Sciatic nerve (tissue), 2 donors: ENCODE measurements at regions of chr1 and their contacts with region 1.

Region 1: DNA sequence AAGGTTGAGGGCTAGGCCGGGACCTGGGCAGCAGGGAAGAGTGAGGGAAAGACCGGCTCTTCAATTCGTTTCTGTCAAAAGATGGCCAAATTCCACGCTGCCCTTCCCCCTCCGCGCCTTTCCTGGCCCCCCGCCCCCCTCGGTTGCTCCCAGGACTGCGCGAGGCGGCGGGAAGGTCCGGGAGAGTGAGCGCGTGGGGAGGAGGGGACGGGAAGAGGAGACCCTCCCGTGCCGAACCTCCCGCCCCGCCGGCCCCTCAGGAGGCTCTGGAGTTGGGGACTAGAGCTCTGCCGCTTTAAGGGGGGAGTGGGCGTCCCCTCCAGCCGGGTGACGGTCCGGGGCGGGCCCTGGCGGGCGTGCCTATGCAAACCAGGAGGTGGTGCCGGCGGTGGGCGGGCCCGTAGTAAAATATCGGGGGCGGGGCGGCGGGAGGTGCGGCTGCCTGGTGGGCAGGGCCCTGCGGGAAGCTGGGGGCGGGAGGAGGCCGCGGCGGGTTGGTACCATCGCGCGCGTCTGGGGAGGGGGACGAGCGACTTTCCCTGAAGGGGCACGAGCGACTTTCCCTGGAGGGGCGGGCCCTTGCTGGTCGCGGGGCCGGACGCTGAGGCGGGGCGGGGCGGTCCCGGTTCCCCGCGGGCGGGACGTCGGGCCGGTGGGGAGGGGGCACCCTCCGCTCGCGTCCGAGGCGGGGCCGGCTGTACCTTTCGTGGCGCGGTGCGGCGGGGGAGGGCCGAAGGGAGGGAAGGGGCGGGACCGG is 58.2 kb downstream of the BCL9 start:
- DNase-seq: peak; percentile 99
- ATAC-seq: peak; percentile 96

Region 2: DNA sequence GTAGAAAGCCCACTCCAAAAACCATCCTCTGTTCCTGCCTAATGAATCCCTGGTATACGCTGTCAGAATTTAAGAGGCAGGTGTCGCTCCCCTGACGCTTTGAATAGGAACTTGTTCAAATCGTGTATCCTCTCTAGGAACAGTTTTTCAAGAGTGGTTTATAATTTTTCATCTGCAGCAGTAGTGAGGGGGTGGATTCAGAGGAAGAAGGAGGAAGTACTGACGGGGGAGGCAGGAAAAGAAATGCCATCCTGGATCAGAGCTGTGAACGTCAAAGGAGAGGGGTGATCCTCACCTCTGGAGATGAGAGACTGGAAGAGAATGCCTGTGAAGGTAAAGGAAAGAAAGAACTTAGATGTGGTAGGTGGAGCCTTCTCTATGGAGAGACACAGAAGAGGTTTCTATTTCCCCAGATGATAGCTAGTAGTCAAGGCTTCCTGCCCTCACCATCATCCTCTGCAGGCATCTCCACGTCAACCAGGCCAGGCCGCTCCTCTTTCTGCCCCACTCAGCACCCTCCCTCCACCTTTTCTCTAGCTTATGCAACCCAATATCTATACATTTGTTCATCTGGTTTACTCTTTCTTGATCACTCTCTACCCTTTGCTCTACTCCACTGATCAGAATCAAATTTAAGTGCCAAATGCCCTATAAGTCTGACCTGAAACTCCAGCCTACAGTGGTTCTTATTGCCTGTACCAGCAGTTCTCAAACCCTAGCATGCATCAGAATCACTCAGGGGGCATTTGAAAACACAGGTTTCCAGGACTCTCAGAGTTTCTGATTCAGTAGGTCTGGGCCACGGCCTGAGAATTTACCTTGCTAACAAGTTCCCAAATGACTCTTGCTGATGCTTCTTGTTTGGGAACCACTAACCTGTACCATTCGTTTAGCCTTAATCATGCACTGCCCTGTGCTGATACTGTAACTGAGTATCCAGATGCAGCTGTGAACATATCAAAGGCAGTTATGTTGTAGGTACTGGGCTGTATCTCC is 71.3 kb before region 1 on chr1:
- intact Hi-C with region 1: no loop called
- DNase-seq: no peak
- ATAC-seq: no peak

Region 3: DNA sequence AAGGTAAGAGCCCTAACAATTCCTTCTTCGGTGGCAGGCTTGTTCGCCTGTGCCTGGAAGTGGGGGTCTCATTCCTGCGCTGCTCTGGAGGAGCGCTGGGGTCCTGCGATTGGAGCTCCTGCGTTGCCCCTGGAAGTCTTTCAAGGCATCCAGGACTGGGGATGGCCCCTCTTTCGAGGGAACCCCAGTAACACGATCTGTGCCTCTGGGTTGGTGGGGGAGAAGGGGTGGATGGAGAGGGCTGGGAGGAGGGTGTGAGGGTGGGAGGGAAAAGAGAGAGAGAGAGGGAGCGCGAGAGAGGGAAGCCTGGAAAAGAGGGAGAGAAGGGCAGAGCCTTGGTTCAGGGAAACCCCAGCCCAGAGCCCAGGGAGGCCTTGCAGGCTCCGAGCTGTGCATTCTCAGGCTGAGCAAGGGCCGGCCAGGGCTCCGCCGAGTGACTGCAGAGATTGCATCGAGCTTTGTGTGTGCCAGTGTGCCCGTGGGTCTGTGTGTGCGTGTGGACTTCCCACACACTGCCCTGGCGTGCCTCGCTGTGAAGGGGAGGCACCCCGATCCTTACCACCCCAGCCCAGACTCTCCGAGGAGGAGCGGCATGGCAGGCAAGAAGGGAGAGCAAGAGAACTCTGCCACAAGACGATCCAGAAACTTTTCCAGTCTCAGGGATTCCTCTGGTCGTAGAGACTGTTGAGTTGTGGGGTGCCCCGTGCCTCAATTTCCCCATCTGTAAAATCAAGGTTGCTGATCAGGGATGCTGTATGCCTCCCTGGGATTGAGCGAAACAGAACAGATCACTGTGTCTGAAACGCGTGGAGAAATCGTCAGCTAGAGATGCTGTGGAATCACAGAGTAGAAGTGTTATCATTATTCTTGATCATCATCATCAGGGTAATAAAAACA is 57.6 kb before region 1 on chr1:
- intact Hi-C with region 1: loop called (anchors 5 kb)
- DNase-seq: peak; percentile 72
- ATAC-seq: peak; percentile 82